PC-9 (cell line): ENCODE measurements at regions of chr6 and their contacts with region 1.

Region 1: DNA sequence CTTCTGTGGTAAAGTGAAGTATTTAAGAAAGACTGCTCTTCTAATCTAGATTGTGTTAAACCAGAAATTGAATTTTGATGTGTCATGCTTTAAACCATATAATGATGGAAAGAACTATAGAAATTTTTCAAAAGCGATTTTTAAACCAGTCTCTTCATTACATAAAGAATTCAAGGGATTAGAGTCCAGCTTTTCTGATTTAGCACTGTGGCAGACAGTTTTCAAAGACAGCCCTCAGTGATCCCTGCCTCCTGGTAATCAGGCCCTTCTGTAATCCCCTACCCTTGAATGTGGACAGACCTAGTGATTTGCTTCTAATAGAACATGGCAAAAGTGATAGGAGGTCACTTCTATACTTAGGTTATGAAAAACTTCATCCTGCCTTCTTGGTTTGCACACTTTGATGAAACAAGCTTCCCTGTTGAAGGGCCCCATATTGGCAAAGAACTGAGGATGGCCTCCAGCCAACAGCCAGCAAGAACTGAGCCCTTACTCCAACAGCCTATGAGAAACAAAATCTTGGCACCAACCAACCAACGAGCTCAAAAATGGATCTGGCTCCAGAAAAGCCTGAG is 191.4 kb downstream of the DST start:
- DNase-seq: no peak
- H3K4me3 ChIP-seq: no peak overlapping the region
- H3K27ac ChIP-seq: no peak overlapping the region
- H3K4me1 ChIP-seq: no peaks in the 10 kb centered on the region
- H3K27me3 ChIP-seq: no peaks in the 10 kb centered on the region
- CTCF ChIP-seq: no peak

Region 2: DNA sequence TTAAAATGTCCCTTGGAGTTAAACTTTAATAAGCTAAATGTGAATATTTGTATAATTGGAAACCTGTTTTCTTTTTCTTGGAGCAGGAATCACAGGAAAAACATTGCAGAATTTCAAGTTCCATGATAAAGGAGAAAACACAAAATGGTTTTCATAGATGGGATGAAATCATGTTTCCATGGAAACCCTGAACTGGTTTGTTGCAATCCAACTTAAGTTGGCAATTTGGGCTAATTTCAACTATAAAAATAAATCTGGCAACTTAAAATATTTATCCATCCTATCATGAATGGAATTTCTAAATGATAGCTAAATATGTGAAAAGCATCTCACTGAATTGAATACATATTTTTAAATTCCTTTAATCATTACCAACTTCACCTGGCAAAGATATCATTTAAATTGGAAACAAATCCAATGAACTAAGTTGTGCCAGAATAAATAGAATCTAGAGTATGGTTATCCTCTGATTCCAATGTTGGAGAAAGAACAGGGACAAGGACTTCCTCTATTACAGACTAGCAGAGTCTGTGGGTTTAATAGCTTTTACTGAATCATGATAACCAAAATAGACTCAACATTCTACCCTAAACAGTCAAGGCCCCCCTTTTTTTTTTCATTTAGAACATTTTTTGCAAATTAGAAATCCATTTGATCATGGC is 237.1 kb before region 1 on chr6:
- CTCF ChIA-PET with region 1: no interaction called
- POLR2A ChIA-PET with region 1: no interaction called
- intact Hi-C with region 1: no loop called
- DNase-seq: no peak
- H3K4me3 ChIP-seq: no peak overlapping the region
- H3K27ac ChIP-seq: no peak overlapping the region
- H3K4me1 ChIP-seq: no peaks in the 10 kb centered on the region
- H3K27me3 ChIP-seq: no peaks in the 10 kb centered on the region
- CTCF ChIP-seq: no peak

Region 3: DNA sequence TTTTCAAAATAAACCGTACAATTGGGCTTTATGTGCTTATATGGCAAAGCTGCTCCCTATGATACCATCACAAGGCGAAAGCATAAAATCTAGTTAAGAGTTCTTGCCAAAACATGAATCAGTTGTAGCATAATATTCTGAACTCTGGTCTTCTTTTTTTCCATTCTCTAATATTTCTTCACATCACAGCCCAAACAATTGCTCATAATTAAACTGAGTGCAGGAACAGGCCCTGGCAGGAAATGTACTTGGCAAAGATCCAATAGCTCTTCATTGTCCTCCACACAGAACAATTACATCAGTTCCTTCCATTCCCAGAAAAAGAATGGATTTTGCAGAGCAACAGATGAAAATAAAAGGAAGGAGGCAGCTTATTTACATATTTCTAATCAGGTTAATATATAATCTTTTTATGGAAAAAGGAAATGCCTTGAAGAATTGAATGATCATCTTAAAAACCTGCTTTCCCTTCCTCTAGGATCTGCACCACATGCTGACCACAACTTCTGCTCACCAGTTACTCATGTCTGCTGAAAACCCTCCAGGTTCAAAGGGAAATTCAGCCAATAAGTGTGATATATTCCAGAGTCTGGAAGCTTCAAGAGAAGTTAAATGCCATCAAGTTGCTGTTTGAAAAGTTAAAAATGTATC is 80.6 kb before region 1 on chr6:
- CTCF ChIA-PET with region 1: no interaction called
- POLR2A ChIA-PET with region 1: no interaction called
- intact Hi-C with region 1: loop called (anchors 10 kb)
- DNase-seq: peak in 1 of 2 experiments; percentile 54
- H3K4me3 ChIP-seq: no peak overlapping the region
- H3K27ac ChIP-seq: peak overlapping the region; percentile 37
- H3K4me1 ChIP-seq: peaks cover 20% of the 10 kb centered on the region
- H3K27me3 ChIP-seq: no peaks in the 10 kb centered on the region
- CTCF ChIP-seq: no peak

Region 4: DNA sequence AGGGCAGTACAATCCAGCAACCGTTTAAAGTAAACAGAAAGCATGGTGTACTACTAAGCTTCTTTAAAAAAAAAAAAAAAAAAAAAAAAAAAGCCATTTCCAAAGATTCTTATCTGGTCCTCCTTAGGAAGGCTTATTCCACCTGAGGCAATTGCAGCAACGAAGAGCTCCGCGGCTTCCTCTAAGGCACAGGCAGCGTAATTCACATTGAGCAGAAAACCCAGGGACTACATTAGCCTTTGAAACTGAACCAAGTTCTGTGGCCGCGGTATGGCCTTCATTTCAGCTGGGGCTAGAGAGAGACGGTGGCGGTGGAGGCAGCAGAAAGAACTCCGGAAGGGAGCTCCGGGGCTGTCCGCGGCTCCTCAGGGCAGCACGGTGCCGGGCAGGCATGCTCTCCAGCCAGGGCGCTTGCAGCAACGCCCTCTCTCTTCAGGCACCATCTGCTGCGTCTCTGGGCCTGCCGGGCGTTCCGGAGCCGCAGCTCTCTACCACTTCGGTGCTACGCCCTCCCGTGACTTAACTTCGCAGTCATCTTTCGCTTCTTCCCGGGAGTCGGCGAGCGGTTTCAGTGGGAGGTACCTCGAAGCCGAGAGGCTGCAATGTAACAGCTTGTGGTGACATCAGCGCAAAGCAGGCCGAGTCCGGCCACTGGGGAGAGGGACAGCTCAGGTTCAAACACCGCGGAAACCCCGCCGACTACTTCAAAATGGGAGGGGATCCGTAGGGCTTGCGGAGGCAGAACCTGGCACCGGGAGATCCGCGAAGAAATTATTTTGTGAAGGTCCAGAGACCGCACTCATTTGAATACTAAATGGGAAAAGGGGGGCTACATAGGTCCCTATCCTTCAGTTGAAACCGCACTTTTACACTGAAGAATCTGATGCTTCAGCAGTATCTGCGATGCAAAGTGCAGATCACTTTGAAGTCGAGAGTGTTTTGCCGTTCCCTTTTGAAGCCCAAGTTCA is 91.4 kb after region 1 on chr6:
- CTCF ChIA-PET with region 1: no interaction called
- POLR2A ChIA-PET with region 1: no interaction called
- intact Hi-C with region 1: no loop called
- DNase-seq: peak; percentile 91 to 93
- H3K4me3 ChIP-seq: peak overlapping the region; percentile 62
- H3K27ac ChIP-seq: peak overlapping the region; percentile 87
- H3K4me1 ChIP-seq: peaks cover 26% of the 10 kb centered on the region
- H3K27me3 ChIP-seq: no peaks in the 10 kb centered on the region
- CTCF ChIP-seq: 0 out of 2 replicates have a peak, but pooled peaks have one; percentile 16